ENCODE measurements at regions of chr19 and their contacts with region 1.

Region 1: GRCh38 chr19:11361037-11361770 is 6.0 kb downstream of the PLPPR2 start:
- DNase-seq: peak; percentile 92 to 93 (median 92)
- ATAC-seq: peak; percentile 97
- H3K4me3 ChIP-seq: no peak overlapping the region
- H3K27ac ChIP-seq: no peak overlapping the region
- H3K4me1 ChIP-seq: peaks cover 11 to 49% of the 10 kb centered on the region in 2 experiments; a peak in 4 of 5 replicates
- H3K27me3 ChIP-seq: no peaks in the 10 kb centered on the region
- CTCF ChIP-seq: no peak
- EP300 ChIP-seq: no peak
- POLR2A ChIP-seq: 0 out of 2 replicates have a peak, but pooled peaks have one; percentile 31
- RAD21 ChIP-seq: no peak

Region 2: DNA sequence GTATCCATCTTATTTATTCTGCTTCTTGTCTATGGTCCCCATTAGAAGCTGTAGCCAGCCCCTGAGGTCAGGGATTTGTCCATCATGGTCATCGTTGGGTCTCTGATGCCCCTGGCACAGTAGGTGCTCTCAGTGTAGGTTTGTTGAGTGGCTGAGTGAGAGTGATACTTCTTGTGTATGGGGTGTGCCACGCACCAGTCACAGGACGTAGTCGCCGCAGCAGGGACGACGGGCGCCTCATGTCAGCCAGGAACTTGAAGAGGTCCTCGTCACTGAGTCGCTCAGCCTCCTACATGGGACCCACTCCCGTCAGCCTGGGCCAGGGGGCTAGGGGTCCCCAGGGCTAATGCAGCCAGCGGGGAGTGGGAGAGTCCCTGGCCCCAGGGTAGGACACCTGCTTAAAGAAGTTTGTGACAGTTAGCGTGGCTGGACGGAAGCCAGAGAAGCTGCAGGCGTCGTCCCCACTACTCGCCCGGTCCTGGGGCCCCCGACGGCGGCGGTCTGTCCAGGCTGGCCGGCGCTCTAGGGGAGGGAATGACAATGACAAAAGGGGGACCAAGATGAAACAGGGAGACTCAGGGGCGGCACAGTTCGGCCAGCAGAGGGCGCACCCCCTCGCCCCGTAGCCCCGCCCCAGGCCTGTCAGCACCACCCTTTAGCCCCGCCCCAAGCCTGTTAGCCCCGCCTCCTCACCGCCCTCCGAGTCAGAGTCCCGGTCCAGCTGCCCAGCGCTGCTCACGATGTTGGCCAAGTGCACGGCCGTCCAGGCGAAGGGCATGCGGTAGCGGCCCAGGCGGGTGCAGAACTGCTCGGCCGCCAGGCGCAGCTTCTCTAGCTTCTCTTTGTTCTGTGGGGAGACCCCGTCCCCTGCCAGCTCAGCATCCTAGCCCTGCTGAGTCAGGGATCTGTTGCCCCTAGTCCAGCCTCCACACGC is 118.1 kb before region 1 on chr19:
- CTCF ChIA-PET with region 1: no interaction called
- POLR2A ChIA-PET with region 1: no interaction called
- in situ Hi-C with region 1: no loop called
- intact Hi-C with region 1: no loop called
- DNase-seq: peak; percentile 91 to 99 (median 99)
- ATAC-seq: peak; percentile 99
- H3K4me3 ChIP-seq: no peak overlapping the region
- H3K27ac ChIP-seq: no peak overlapping the region
- H3K4me1 ChIP-seq: peaks cover 0 to 32% of the 10 kb centered on the region in 2 experiments; a peak in 2 of 5 replicates
- H3K27me3 ChIP-seq: no peaks in the 10 kb centered on the region
- CTCF ChIP-seq: peak; percentile 70 to 82 (median 78)
- EP300 ChIP-seq: no peak
- POLR2A ChIP-seq: no peak
- RAD21 ChIP-seq: peak in 1 of 2 experiments; percentile 32; a peak in 2 of 4 replicates

Region 3: DNA sequence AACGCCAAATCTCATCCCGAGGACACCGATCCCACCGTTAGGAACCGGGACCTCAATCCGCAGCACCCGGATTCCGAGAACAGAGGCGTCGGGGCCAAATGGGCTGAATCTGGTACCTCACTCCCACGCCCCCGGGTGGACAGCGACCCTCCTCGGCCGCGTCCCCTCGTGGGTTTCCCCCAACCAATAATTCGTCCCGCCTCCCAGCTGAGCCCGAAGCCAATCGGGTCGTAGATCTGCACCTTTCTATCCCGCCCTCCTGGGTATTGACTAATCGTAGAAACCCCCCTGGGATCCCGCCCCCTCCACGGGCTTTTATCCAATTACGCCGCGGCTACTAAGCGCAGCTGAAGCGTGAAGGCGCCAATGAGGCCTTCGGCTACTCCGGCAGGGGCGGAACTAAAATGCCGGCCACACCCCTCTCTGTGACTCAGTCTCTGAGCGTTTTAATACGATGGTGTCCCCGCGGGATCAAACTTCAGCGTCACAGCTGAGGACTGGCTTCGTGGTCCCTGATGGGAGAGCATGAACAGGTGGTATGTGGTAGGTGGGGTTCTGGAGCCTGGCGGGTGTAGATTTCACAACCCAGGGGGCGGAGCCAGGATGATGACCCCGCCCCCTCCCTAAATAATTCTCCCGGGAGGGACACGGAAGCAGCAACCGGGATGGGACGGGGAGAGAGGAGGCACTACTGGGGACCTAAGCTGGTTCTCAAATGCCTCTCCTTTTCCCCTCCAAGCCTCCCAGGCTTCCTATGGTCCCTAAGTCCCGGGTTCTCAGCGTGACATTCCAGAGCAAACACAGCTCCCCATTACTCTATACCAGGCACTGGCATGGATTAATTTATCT is 14.9 kb before region 1 on chr19 and contains the starts of genes CCDC159 and TMEM205:
- CTCF ChIA-PET with region 1: no interaction called
- POLR2A ChIA-PET with region 1: interaction called, 13 read pairs
- in situ Hi-C with region 1: no loop called
- intact Hi-C with region 1: no loop called
- DNase-seq: peak; percentile 92 to 99 (median 96)
- ATAC-seq: peak; percentile 97
- H3K4me3 ChIP-seq: peak within 1 kb of the TSS; percentile 61
- H3K27ac ChIP-seq: peak within 1 kb of the TSS; percentile 67
- H3K4me1 ChIP-seq: peaks cover 20 to 34% of the 10 kb centered on the region in 2 experiments; a peak in 4 of 5 replicates
- H3K27me3 ChIP-seq: no peaks in the 10 kb centered on the region
- CTCF ChIP-seq: peak in 2 of 3 experiments; percentile 13 to 17; a peak in 1 of 6 replicates
- EP300 ChIP-seq: no peak
- POLR2A ChIP-seq: peak; percentile 48
- RAD21 ChIP-seq: no peak
- polyA plus RNA-seq, gene CCDC159: 0.68 to 2.5 TPM
- polyA plus RNA-seq, gene TMEM205: 21.3 to 27.3 TPM

Region 4: GRCh38 chr19:11374433-11375142 is 13.4 kb after region 1 on chr19 and contains the start of gene SWSAP1:
- CTCF ChIA-PET with region 1: no interaction called
- POLR2A ChIA-PET with region 1: interaction called, 36 read pairs
- in situ Hi-C with region 1: no loop called
- intact Hi-C with region 1: no loop called
- DNase-seq: peak; percentile 95 to 100 (median 98)
- ATAC-seq: peak; percentile 97
- H3K4me3 ChIP-seq: peak within 1 kb of the TSS; percentile 59
- H3K27ac ChIP-seq: peak within 1 kb of the TSS; percentile 84
- H3K4me1 ChIP-seq: peaks cover 22 to 31% of the 10 kb centered on the region in 2 experiments
- H3K27me3 ChIP-seq: no peaks in the 10 kb centered on the region
- CTCF ChIP-seq: no peak
- EP300 ChIP-seq: no peak
- POLR2A ChIP-seq: peak; percentile 96
- RAD21 ChIP-seq: no peak; a peak in 1 of 4 replicates
- polyA plus RNA-seq, gene SWSAP1: 0.18 to 0.73 TPM

Region 5: DNA sequence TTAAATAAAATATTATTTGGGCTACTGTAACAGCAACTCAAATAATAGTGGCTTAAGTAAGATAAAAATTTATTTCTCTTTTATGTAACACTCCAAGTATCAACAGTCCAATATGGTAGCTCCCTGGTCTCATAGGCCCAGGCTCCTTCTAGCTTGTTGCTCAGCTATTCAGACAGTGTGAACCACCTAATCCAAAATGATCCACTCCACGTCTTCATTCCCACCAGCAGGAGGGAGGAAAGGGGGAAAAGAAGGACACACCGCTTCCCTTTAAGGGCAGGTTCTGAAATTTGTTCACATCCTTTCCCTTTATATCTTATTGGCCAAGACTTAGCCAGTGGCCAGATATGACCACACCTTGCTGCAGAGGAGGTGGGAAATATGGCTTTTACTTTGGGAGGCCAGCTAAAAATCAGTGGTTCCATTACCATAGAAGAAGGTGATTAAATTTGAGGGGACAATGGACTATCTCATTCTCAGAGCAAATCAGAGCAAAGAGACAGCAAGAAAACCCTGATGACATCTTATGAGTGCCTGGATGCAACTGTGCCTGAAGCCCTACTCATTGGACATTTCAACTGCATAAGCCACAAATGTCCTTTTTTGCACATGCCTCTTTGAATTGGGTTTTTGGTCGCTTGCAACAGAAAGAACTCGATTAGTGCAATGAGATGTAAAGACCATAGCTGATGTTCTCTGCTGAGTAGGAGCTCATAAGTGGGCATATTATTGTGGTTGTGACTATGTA is 29.9 kb after region 1 on chr19:
- CTCF ChIA-PET with region 1: no interaction called
- POLR2A ChIA-PET with region 1: no interaction called
- in situ Hi-C with region 1: no loop called
- intact Hi-C with region 1: no loop called
- DNase-seq: peak in 1 of 4 experiments; percentile 2
- ATAC-seq: no peak
- H3K4me3 ChIP-seq: no peak overlapping the region
- H3K27ac ChIP-seq: no peak overlapping the region
- H3K4me1 ChIP-seq: no peaks in the 10 kb centered on the region; a peak in 2 of 5 replicates
- H3K27me3 ChIP-seq: no peaks in the 10 kb centered on the region
- CTCF ChIP-seq: no peak
- EP300 ChIP-seq: no peak
- POLR2A ChIP-seq: no peak
- RAD21 ChIP-seq: no peak